Kidney (tissue), 22 donors: ENCODE measurements at regions of chr2 and their contacts with region 1.

Region 1: DNA sequence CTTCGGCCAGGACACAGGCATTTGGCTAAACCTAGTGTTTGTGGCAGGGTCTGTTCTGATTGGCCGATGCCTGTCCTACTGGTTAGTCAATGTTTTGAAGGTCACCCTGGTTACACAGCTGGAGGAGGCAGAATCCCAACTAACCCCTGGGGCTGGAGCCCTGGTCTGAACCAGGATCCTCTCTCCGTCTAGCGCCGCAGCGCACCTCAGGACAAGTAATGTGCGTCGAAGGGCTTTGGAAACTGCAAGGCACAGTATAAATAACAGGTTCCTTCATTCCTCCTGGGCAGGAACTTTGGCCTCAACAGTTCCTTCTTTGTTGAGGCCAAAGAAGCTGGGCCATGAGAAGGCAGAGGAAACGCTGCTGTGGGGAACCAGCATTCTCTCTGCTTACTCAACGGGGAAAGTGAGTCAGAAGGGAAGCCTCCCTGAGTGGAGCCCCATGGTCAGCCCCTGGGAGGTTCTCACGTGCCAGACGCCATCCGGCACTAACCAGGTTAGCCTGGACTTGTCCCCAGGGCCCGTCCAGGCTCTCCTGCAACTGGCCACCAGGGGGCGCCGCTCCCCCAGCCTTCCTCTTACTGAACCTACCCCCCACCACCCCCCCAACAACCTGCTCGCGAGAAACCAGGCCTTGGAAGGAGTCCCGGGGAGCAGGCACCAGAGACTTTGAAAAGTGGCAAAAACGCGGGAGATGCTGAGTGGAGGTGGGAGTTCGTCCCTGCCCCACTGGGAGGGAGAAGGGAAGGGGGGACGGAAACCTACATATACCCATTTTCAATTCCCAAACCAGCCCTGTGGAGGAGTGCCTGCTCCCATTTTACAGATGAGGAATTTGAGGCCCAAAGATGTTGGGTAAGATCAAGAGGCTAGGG is 19.8 kb downstream of the TEX44 start:
- DNase-seq: peak; percentile 90 to 98 (median 94)
- H3K4me3 ChIP-seq: peak overlapping the region in 1 of 3 donors; percentile 16
- H3K27ac ChIP-seq: peak overlapping the region; percentile 99 to 100
- H3K4me1 ChIP-seq: peaks cover 0 to 30% (median 19%) of the 10 kb centered on the region in 3 donors
- H3K27me3 ChIP-seq: no peaks in the 10 kb centered on the region
- CTCF ChIP-seq: peak; percentile 92

Region 2: DNA sequence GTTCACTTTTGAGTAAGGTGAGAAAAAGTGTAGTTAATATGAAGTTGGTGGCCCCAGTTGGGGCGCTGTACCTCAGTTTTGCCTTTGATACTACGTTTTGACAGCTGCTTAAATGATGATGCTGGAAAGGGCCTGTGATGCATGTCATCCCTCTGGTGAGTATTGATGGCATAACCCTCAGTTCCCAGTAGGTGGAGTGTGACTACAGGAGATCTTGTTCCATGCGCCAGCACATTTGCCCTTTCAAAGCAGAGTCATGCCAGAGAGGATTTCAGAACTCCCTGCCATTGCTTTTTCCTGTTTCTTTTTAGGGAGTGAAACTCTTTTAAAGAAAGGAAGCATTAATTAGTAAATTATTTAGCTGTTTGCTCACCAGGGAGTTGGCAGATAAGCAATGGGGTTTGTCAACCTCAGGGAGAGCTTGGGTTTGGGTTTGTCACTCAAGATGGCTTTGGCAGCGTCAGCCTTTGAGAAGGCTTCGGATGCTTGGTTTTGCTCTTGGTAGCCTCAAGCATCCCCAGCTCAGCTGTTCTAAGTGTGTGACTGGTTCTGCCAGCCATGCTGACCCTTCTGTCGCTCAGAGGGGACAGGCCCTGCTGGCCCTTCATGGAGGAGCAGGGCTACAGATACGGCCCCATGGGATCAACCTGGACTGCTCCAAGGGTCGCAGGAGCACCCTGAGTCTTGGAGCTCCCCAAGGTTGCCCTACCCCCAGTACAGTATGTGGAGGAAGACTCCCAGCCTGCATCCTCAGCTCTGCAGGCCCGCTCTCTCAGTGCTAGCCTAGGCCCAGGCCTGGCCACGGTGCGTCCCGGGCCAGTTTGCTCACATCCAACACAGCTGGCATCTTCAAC is 384.9 kb before region 1 on chr2:
- intact Hi-C with region 1: no loop called
- DNase-seq: peak in 4 of 5 donors; percentile 67 to 91 (median 78)
- H3K4me3 ChIP-seq: no peak overlapping the region
- H3K27ac ChIP-seq: peak overlapping the region in 1 of 2 donors; percentile 8
- H3K4me1 ChIP-seq: peaks cover 0 to 9% (median 6%) of the 10 kb centered on the region in 3 donors
- H3K27me3 ChIP-seq: no peaks in the 10 kb centered on the region
- CTCF ChIP-seq: peak; percentile 85

Region 3: DNA sequence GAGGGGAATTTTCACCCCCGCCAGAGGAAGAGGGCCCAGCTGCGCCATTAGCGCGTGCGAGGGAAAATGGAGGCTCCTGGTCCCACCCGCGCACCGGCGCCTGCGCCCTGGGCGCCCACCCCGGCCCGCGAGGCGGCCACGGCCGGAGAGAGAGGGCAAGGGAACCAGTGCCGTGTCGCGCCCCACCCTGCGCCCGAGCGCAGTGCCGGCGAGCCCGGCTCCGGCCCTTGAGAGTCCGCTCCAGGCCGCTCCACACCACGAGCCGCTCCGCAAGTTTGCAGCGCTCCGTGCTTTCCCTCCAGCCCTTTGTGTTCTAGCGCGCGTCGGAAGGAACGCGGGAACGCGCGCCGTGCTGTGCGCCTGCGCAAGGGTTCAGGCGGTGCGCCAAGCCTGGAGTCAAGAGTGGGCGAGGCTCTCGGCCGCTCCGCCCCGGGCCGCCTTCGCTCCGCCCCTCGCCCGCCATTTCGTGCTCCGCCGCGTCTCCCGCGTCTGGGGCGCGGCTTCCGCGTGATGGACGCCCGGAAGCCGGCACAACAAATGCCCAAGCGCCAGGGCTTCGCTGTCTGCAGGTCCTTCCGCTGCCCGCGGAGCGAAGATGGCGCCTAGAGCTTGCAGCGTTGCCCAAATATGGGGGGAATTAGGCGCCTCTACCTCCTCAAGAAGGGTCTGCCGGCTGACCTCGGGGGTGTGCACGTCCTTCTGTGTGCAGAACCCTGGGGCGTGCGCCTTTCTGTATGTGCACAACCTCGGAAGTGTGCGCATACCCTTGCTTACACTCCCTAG is 49.8 kb after region 1 on chr2:
- intact Hi-C with region 1: loop called (anchors 10 kb)
- DNase-seq: peak; percentile 98 to 99 (median 99)
- H3K4me3 ChIP-seq: peak overlapping the region; percentile 50 to 71 (median 59)
- H3K27ac ChIP-seq: peak overlapping the region; percentile 82 to 90
- H3K4me1 ChIP-seq: peaks cover 0 to 14% (median 0%) of the 10 kb centered on the region in 3 donors
- H3K27me3 ChIP-seq: no peaks in the 10 kb centered on the region
- CTCF ChIP-seq: no peak

Region 4: GRCh38 chr2:231709981-231710798 is 97.8 kb after region 1 on chr2:
- intact Hi-C with region 1: loop called (anchors 5 kb)
- DNase-seq: peak; percentile 89 to 95 (median 93)
- H3K4me3 ChIP-seq: peak overlapping the region; percentile 70 to 83 (median 78)
- H3K27ac ChIP-seq: peak overlapping the region; percentile 99 to 100
- H3K4me1 ChIP-seq: peaks cover 5 to 25% (median 23%) of the 10 kb centered on the region in 3 donors
- H3K27me3 ChIP-seq: no peaks in the 10 kb centered on the region
- CTCF ChIP-seq: peak; percentile 82